ENCODE measurements at regions of chr2 and their contacts with region 1.

Region 1: GRCh38 chr2:160582490-160583145 is 89.0 kb upstream of the RBMS1 start:
- DNase-seq: no peak
- H3K4me3 ChIP-seq: no peak overlapping the region
- H3K27ac ChIP-seq: no peak overlapping the region
- H3K4me1 ChIP-seq: peaks cover 0 to 12% (median 3%) of the 10 kb centered on the region in 4 experiments; a peak in 5 of 7 replicates
- H3K27me3 ChIP-seq: no peaks in the 10 kb centered on the region
- CTCF ChIP-seq: no peak
- EP300 ChIP-seq: no peak
- POLR2A ChIP-seq: no peak
- RAD21 ChIP-seq: no peak

Region 2: GRCh38 chr2:160324161-160324800 is 258.3 kb before region 1 on chr2:
- CTCF ChIA-PET with region 1: interaction called, 14 read pairs
- POLR2A ChIA-PET with region 1: no interaction called
- DNase-seq: no peak
- H3K4me3 ChIP-seq: no peak overlapping the region
- H3K27ac ChIP-seq: no peak overlapping the region
- H3K4me1 ChIP-seq: peaks cover 2 to 5% (median 4%) of the 10 kb centered on the region in 4 experiments; a peak in 4 of 7 replicates
- H3K27me3 ChIP-seq: no peaks in the 10 kb centered on the region
- CTCF ChIP-seq: peak; percentile 14 to 61 (median 49); a peak in 3 of 4 replicates
- EP300 ChIP-seq: no peak
- POLR2A ChIP-seq: no peak
- RAD21 ChIP-seq: peak; percentile 55 to 67

Region 3: DNA sequence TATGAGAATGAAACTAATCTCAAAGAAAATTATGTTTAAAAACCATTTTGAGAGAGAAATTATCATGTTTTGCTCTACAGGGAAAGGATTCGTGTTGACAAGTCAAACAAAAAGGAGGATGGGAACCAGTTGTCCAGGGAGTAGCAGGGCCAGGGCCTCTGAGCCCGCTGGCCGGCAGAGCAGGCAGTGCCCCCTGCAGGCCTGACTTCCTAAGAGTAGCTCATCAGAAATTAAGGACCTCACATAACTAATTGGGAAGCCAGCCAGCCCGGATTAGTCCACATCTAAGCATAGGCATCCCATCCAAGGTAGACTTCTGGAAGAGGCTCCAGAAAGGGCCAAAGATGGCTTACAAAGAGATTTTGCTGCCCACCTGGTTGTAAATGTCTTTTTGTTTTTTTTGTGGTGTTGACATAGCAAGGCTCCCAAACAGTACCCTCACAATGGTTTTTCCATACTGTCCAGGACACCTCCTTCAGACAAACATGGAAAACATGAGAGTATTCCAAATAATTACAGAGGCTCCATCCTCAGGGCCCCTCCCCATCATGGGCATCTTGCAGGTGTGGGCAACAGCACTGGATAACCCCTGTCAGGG is 336.4 kb after region 1 on chr2:
- CTCF ChIA-PET with region 1: interaction called, 14 read pairs
- POLR2A ChIA-PET with region 1: no interaction called
- DNase-seq: peak; percentile 58 to 74
- H3K4me3 ChIP-seq: no peak overlapping the region
- H3K27ac ChIP-seq: no peak overlapping the region
- H3K4me1 ChIP-seq: peaks cover 0 to under 1% (median 0%) of the 10 kb centered on the region in 4 experiments; a peak in 1 of 7 replicates
- H3K27me3 ChIP-seq: no peaks in the 10 kb centered on the region
- CTCF ChIP-seq: peak; percentile 73 to 80 (median 74)
- EP300 ChIP-seq: no peak
- POLR2A ChIP-seq: no peak
- RAD21 ChIP-seq: peak; percentile 85 to 92

Region 4: DNA sequence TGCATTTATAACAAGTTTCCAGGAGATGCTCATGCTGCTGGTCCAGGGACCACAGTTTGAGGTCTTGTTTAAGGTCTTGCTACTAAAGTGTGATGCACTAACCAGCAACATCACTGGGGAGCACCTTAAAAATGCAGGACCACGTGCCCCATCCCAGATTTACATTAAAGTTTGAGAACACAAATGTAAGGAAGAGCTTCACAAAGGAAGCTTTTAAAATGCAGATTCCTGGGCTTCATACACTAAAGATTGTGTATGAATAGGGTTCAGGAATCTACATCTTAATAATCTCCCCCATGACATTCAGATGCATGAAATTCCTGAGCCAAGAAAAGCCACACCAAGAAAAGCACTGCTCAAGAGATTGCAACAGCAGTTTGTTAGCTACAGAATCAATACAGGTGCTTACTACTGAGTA is 342.3 kb after region 1 on chr2:
- CTCF ChIA-PET with region 1: interaction called, 13 read pairs
- POLR2A ChIA-PET with region 1: no interaction called
- DNase-seq: peak in 1 of 2 experiments; percentile 33
- H3K4me3 ChIP-seq: no peak overlapping the region
- H3K27ac ChIP-seq: no peak overlapping the region
- H3K4me1 ChIP-seq: peaks cover 0 to 11% (median 7%) of the 10 kb centered on the region in 4 experiments; a peak in 3 of 7 replicates
- H3K27me3 ChIP-seq: no peaks in the 10 kb centered on the region
- CTCF ChIP-seq: no peak
- EP300 ChIP-seq: no peak
- POLR2A ChIP-seq: no peak
- RAD21 ChIP-seq: no peak

Region 5: GRCh38 chr2:160970052-160970965 is 387.7 kb after region 1 on chr2:
- CTCF ChIA-PET with region 1: interaction called, 17 read pairs
- POLR2A ChIA-PET with region 1: interaction called, 4 read pairs
- DNase-seq: peak in 1 of 2 experiments; percentile 38
- H3K4me3 ChIP-seq: peak overlapping the region in 1 of 4 experiments; percentile 26; a peak in 1 of 8 replicates
- H3K27ac ChIP-seq: peak overlapping the region; percentile 78
- H3K4me1 ChIP-seq: no peaks in the 10 kb centered on the region
- H3K27me3 ChIP-seq: no peaks in the 10 kb centered on the region
- CTCF ChIP-seq: peak in 2 of 3 experiments; percentile 55 to 63; a peak in 3 of 4 replicates
- EP300 ChIP-seq: peak in 1 of 2 experiments; percentile 81; a peak in 1 of 3 replicates
- POLR2A ChIP-seq: no peak
- RAD21 ChIP-seq: peak; percentile 92

Region 6: DNA sequence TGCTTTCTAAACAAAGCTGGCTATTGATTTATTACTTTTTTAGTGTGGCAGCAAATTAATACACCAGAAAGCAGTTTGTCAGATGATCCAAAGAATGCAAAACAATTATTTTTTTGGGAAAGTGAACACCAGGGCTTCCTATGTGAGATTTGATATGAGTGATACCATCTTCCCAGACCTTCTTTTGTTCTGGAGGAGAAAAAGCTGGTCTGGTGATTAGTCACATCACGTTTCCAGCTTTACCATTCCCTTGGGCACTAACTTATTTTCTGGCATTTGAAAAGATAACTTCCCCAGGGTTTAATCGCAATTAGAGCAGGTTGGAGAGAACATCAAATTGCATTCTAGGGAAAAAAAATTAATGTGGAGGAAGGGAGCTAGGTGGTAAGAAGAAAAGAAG is 394.8 kb after region 1 on chr2:
- CTCF ChIA-PET with region 1: interaction called, 11 read pairs
- POLR2A ChIA-PET with region 1: no interaction called
- DNase-seq: no peak
- H3K4me3 ChIP-seq: no peak overlapping the region
- H3K27ac ChIP-seq: no peak overlapping the region
- H3K4me1 ChIP-seq: no peaks in the 10 kb centered on the region
- H3K27me3 ChIP-seq: no peaks in the 10 kb centered on the region
- CTCF ChIP-seq: no peak
- EP300 ChIP-seq: no peak
- POLR2A ChIP-seq: no peak
- RAD21 ChIP-seq: no peak

Region 7: DNA sequence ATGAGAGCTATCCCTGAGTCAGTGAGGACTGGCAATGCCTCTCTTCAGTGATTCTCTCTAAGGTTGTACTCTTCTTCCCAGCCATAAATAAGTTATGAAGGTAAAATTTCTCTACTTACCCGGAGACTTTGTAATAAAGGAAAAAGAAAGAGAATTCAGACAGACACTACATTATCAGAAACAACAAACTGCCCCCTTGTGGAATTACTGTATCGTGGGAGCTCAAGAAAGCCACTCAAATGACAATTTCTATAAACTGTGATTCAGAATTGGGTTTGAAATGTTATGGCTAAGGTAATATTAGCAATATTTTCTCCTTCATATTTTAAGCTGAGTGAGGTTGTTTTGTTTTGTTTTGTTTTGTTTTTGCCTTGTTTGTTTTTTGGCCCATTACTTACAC is 421.8 kb after region 1 on chr2:
- CTCF ChIA-PET with region 1: interaction called, 13 read pairs
- POLR2A ChIA-PET with region 1: no interaction called
- DNase-seq: no peak
- H3K4me3 ChIP-seq: no peak overlapping the region
- H3K27ac ChIP-seq: no peak overlapping the region
- H3K4me1 ChIP-seq: no peaks in the 10 kb centered on the region
- H3K27me3 ChIP-seq: no peaks in the 10 kb centered on the region
- CTCF ChIP-seq: peak in 2 of 3 experiments; percentile 13 to 38; a peak in 2 of 4 replicates
- EP300 ChIP-seq: no peak
- POLR2A ChIP-seq: no peak
- RAD21 ChIP-seq: peak; percentile 44 to 49; a peak in 3 of 4 replicates